ENCODE measurements at regions of chr14 and their contacts with region 1.

Region 1: DNA sequence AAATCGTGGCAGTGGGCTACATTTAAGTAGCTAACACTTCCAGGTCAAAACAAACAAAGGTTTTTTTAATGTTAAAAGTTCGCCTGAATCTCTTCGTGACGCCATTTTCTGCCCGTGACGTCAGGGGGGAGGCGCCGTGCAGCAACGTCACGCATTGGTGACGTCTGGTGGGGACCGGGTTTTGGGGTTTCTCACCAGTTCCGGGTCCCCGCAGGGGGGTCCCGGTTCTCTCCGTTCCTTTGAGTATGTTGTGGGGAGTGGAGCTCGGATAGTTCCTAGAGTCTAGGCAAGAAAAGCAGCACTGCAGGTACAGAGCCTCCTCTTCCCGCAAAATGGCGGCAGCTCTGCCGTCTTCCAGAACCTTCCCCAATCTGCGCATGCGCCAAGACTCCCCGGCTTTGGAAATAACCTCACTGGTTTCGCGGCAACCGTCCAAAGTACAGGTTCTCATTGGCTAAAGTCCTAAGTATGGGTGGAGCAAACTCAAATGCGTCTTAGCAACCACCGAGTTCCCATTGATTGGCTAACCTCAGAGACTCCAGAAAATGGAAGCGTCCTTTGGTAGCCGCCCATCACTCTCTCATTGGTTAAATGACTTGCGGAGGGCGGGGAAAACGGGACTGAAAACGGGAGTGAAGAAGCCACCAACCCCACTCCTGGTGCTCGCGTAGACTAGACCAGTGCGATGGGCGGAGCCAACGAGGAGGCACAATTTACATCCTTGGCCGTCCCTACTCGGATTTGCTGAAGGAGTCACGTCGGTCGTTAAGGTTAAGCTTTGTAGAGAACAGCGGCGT is at the start of gene RBM23:
- DNase-seq: peak; percentile 98 to 100 (median 100)
- ATAC-seq: peak; percentile 92
- H3K4me3 ChIP-seq: peak within 1 kb of the TSS; percentile 96
- H3K4me3 Mint-ChIP-seq: peak within 1 kb of the TSS; percentile 93 to 100 (median 97)
- H3K27ac ChIP-seq: peak within 1 kb of the TSS; percentile 98
- H3K27ac Mint-ChIP-seq: peak within 1 kb of the TSS; percentile 100
- H3K4me1 ChIP-seq: peaks cover 0 to 19% of the 10 kb centered on the region in 2 donors
- H3K4me1 Mint-ChIP-seq: peaks cover 18 to 56% (median 49%) of the 10 kb centered on the region in 7 donors
- H3K27me3 ChIP-seq: no peaks in the 10 kb centered on the region
- H3K27me3 Mint-ChIP-seq: peaks cover 0 to 4% (median 0%) of the 10 kb centered on the region in 5 donors
- total RNA-seq, gene RBM23: 91.9 to 140 (median 99.1) TPM

Region 2: GRCh38 chr14:22155571-22155970 is 763.4 kb before region 1 on chr14:
- CTCF ChIA-PET with region 1: no interaction called
- POLR2A ChIA-PET with region 1: no interaction called
- intact Hi-C with region 1: no loop called
- DNase-seq: no peak
- ATAC-seq: no peak
- H3K4me3 ChIP-seq: no peak overlapping the region
- H3K4me3 Mint-ChIP-seq: no peak overlapping the region
- H3K27ac ChIP-seq: no peak overlapping the region
- H3K27ac Mint-ChIP-seq: no peak overlapping the region
- H3K4me1 ChIP-seq: no peaks in the 10 kb centered on the region
- H3K4me1 Mint-ChIP-seq: peaks cover 0 to 23% (median 18%) of the 10 kb centered on the region in 7 donors
- H3K27me3 ChIP-seq: no peaks in the 10 kb centered on the region
- H3K27me3 Mint-ChIP-seq: no peaks in the 10 kb centered on the region

Region 3: DNA sequence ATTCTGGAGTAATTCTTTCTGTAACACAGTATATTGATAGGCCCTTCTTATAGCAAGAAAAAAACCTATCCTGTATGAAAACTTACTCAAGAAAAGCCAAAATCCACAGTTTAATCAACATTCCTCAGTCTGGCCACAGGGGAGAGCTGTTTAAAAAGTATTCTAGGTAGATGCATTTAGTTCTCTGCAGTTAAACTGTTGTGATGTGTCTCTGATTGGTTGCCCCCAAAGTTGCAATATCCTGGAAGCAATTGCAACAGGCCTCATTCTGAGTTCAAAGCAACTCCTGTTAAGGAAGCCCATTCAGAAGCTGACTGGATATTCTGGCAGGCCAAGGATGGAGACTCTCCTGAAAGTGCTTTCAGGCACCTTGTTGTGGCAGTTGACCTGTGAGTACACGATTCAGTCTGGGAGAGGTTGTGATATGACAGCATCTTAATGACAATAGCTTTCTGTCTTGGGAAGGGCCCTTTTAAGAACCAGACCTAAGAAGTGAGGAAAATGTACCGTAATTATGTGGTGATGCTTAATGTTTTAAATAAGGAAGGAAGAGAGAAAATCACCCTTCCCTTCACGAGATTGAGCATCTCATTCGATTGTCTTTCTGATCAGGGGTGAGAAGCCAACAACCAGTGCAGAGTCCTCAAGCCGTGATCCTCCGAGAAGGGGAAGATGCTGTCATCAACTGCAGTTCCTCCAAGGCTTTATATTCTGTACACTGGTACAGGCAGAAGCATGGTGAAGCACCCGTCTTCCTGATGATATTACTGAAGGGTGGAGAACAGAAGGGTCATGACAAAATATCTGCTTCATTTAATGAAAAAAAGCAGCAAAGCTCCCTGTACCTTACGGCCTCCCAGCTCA is 750.7 kb before region 1 on chr14:
- CTCF ChIA-PET with region 1: no interaction called
- POLR2A ChIA-PET with region 1: no interaction called
- intact Hi-C with region 1: no loop called
- DNase-seq: peak in 5 of 9 donors; percentile 1 to 31 (median 11)
- ATAC-seq: no peak
- H3K4me3 ChIP-seq: no peak overlapping the region
- H3K4me3 Mint-ChIP-seq: peak overlapping the region; percentile 62 to 88 (median 80)
- H3K27ac ChIP-seq: peak overlapping the region; percentile 41
- H3K27ac Mint-ChIP-seq: peak overlapping the region; percentile 48 to 91 (median 78)
- H3K4me1 ChIP-seq: no peaks in the 10 kb centered on the region
- H3K4me1 Mint-ChIP-seq: peaks cover 0 to 6% (median 3%) of the 10 kb centered on the region in 7 donors
- H3K27me3 ChIP-seq: no peaks in the 10 kb centered on the region
- H3K27me3 Mint-ChIP-seq: no peaks in the 10 kb centered on the region

Region 4: DNA sequence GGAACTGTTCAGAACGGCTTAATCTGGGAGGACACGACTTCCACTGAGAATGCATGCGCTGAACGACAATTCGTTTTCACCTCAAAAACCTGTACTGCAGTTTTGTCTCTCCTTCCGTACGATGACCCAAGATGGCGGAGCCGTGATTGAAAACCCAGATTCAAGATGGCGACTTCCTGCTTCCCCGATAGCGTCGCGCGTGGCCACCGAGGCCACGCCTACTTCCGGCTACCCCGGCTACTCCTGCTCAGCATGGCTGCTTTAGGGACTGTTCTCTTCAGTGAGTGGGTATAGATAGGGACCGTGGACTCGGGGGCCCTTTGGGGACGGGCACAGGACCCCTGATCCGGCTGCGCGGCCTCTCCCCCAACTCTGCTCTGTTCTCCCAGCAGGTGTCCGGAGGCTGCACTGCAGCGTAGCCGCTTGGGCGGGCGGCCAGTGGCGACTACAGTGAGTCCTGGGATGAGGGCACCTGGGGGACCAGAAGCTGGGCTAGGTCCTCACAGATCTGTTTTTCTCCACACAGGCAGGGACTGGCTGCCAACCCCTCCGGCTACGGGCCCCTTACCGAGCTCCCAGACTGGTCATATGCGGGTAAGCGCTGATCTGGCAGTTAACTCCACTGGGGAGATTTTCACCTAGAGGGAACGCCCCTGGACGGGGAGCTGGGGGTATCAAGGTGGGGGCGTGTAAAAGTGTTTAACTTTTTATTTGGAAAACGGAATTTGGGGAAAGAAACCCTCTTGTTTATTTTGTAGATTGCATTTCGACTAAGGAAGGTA is 89.2 kb before region 1 on chr14 and contains the start of gene MRPL52:
- CTCF ChIA-PET with region 1: interaction called, 3 read pairs
- POLR2A ChIA-PET with region 1: interaction called, 10 read pairs
- intact Hi-C with region 1: loop called (anchors 1 kb)
- DNase-seq: peak; percentile 71 to 90 (median 88)
- ATAC-seq: peak; percentile 97
- H3K4me3 ChIP-seq: peak within 1 kb of the TSS; percentile 99
- H3K4me3 Mint-ChIP-seq: peak within 1 kb of the TSS; percentile 74 to 94 (median 91)
- H3K27ac ChIP-seq: peak within 1 kb of the TSS; percentile 95
- H3K27ac Mint-ChIP-seq: peak within 1 kb of the TSS; percentile 91 to 99 (median 97)
- H3K4me1 ChIP-seq: peaks cover 11 to 21% of the 10 kb centered on the region in 2 donors
- H3K4me1 Mint-ChIP-seq: peaks cover 11 to 39% (median 32%) of the 10 kb centered on the region in 7 donors
- H3K27me3 ChIP-seq: no peaks in the 10 kb centered on the region
- H3K27me3 Mint-ChIP-seq: peaks cover 0 to 2% (median 0%) of the 10 kb centered on the region in 5 donors
- total RNA-seq, gene MRPL52: 32.9 to 118 (median 48.2) TPM

Region 5: GRCh38 chr14:22886500-22887259 is 32.3 kb before region 1 on chr14:
- CTCF ChIA-PET with region 1: interaction called, 3 read pairs
- POLR2A ChIA-PET with region 1: interaction called, 24 read pairs
- intact Hi-C with region 1: loop called (anchors 1 kb)
- DNase-seq: peak; percentile 42 to 75 (median 69)
- ATAC-seq: peak; percentile 80
- H3K4me3 ChIP-seq: peak overlapping the region; percentile 77
- H3K4me3 Mint-ChIP-seq: peak overlapping the region; percentile 88 to 100 (median 92)
- H3K27ac ChIP-seq: peak overlapping the region; percentile 75
- H3K27ac Mint-ChIP-seq: peak overlapping the region; percentile 85 to 98 (median 96)
- H3K4me1 ChIP-seq: peaks cover 21 to 53% of the 10 kb centered on the region in 2 donors
- H3K4me1 Mint-ChIP-seq: peaks cover 39 to 80% (median 72%) of the 10 kb centered on the region in 7 donors
- H3K27me3 ChIP-seq: no peaks in the 10 kb centered on the region
- H3K27me3 Mint-ChIP-seq: peaks cover 0 to 21% (median 0%) of the 10 kb centered on the region in 5 donors

Region 6: GRCh38 chr14:22929104-22929847 is 10.3 kb after region 1 on chr14 and contains the start of gene PRMT5:
- CTCF ChIA-PET with region 1: interaction called, 8 read pairs
- POLR2A ChIA-PET with region 1: interaction called, 74 read pairs
- intact Hi-C with region 1: loop called (anchors 1 kb)
- DNase-seq: peak; percentile 81 to 100 (median 99)
- ATAC-seq: peak; percentile 97
- H3K4me3 ChIP-seq: peak within 1 kb of the TSS; percentile 91
- H3K4me3 Mint-ChIP-seq: no peak within 1 kb of the TSS
- H3K27ac ChIP-seq: peak within 1 kb of the TSS; percentile 91
- H3K27ac Mint-ChIP-seq: no peak within 1 kb of the TSS
- H3K4me1 ChIP-seq: peaks cover 9 to 17% of the 10 kb centered on the region in 2 donors
- H3K4me1 Mint-ChIP-seq: peaks cover 5 to 36% (median 20%) of the 10 kb centered on the region in 7 donors
- H3K27me3 ChIP-seq: no peaks in the 10 kb centered on the region
- H3K27me3 Mint-ChIP-seq: no peaks in the 10 kb centered on the region
- total RNA-seq, gene PRMT5: 24.9 to 82.8 (median 34.2) TPM

Region 7: GRCh38 chr14:23006544-23007419 is 87.8 kb after region 1 on chr14:
- CTCF ChIA-PET with region 1: no interaction called
- POLR2A ChIA-PET with region 1: interaction called, 5 read pairs
- intact Hi-C with region 1: loop called in 1 of 2 experiments (anchors 1 kb)
- DNase-seq: peak; percentile 88 to 99 (median 98)
- ATAC-seq: peak; percentile 97
- H3K4me3 ChIP-seq: peak overlapping the region; percentile 94
- H3K4me3 Mint-ChIP-seq: peak overlapping the region; percentile 91 to 100 (median 96)
- H3K27ac ChIP-seq: peak overlapping the region; percentile 86
- H3K27ac Mint-ChIP-seq: peak overlapping the region; percentile 87 to 99 (median 98)
- H3K4me1 ChIP-seq: peaks cover 9 to 25% of the 10 kb centered on the region in 2 donors
- H3K4me1 Mint-ChIP-seq: peaks cover 12 to 60% (median 48%) of the 10 kb centered on the region in 7 donors
- H3K27me3 ChIP-seq: no peaks in the 10 kb centered on the region
- H3K27me3 Mint-ChIP-seq: no peaks in the 10 kb centered on the region

Region 8: GRCh38 chr14:23469127-23469905 is 550.3 kb after region 1 on chr14 and contains the start of gene NGDN:
- CTCF ChIA-PET with region 1: no interaction called
- POLR2A ChIA-PET with region 1: no interaction called
- intact Hi-C with region 1: loop called in 1 of 2 experiments (anchors 2 kb)
- DNase-seq: peak; percentile 76 to 99 (median 96)
- ATAC-seq: peak; percentile 94
- H3K4me3 ChIP-seq: peak within 1 kb of the TSS; percentile 73
- H3K4me3 Mint-ChIP-seq: peak within 1 kb of the TSS in 1 of 10 donors; percentile 77
- H3K27ac ChIP-seq: peak within 1 kb of the TSS; percentile 94
- H3K27ac Mint-ChIP-seq: peak within 1 kb of the TSS in 2 of 9 donors; percentile 26 to 68
- H3K4me1 ChIP-seq: peaks cover 6 to 11% of the 10 kb centered on the region in 2 donors
- H3K4me1 Mint-ChIP-seq: peaks cover 7 to 10% (median 7%) of the 10 kb centered on the region in 7 donors
- H3K27me3 ChIP-seq: no peaks in the 10 kb centered on the region
- H3K27me3 Mint-ChIP-seq: no peaks in the 10 kb centered on the region
- total RNA-seq, gene NGDN: 52.9 to 152 (median 74.0) TPM

Region 9: GRCh38 chr14:23719225-23719946 is 800.4 kb after region 1 on chr14:
- CTCF ChIA-PET with region 1: no interaction called
- POLR2A ChIA-PET with region 1: no interaction called
- intact Hi-C with region 1: no loop called
- DNase-seq: no peak
- ATAC-seq: no peak
- H3K4me3 ChIP-seq: no peak overlapping the region
- H3K4me3 Mint-ChIP-seq: no peak overlapping the region
- H3K27ac ChIP-seq: no peak overlapping the region
- H3K27ac Mint-ChIP-seq: no peak overlapping the region
- H3K4me1 ChIP-seq: no peaks in the 10 kb centered on the region
- H3K4me1 Mint-ChIP-seq: no peaks in the 10 kb centered on the region
- H3K27me3 ChIP-seq: no peaks in the 10 kb centered on the region
- H3K27me3 Mint-ChIP-seq: peaks cover 0 to 23% (median 15%) of the 10 kb centered on the region in 5 donors